ENCODE measurements at regions of chr10 and their contacts with region 1.

Region 1: DNA sequence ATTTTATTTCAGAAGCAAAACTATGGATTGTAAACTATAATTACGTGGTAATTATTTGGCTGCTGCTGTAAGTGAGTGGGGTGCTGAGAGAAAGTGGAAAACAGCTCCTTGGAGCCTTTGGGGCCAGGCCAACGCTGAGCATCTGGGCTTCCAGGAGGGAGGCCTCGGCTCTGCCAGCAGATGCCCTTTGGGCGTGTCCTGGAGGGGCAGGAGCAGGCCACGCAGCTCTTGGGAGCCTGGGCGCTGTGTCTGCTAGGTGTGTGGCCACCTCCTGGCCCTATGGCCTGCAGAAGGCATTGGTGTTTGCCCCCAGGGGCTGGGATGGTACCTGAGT is 423.3 kb downstream of the GLRX3 start:
- DNase-seq: no peak

Region 2: DNA sequence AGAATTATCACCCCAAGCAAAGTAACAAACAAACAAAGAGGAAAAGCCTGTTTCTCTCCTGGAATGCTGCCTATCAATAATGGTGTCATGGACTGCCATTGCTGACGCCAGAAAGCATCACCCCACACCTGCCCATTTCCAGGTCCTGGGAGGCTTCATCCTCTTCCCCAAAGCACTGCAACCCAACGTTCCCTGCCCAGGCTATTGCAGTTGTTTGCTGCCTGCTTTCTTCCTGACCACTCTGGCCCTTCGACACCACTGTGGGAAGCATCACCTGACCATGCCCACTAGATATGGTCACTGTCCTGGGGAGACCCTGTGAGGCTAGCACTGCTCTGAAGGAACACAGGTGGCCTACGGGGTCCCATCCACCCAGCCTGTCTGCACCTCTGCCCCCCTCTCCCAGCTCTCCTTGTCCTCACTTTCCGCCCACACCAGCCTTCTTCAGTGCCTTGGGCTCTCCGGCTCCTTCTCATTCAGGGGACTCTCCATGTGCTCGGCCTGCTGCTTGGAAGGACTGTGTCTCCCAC is 16.3 kb after region 1 on chr10:
- intact Hi-C with region 1: loop called in 1 of 2 experiments (anchors 1 kb)
- DNase-seq: no peak

Measured in posterior vena cava (tissue), 2 donors.